Activated CD4-positive, alpha-beta memory T cell treated with anti-CD3 and anti-CD28 coated beads for 36 hours (primary cell): ENCODE measurements at regions of chr16 and their contacts with region 1.

Region 1: GRCh38 chr16:8878521-8878911 is 3.6 kb upstream of the LITAFD start:
- DNase-seq: no peak
- H3K4me3 Mint-ChIP-seq: no peak overlapping the region
- H3K27ac Mint-ChIP-seq: no peak overlapping the region
- H3K4me1 Mint-ChIP-seq: peaks cover 2% of the 10 kb centered on the region
- H3K27me3 Mint-ChIP-seq: no peaks in the 10 kb centered on the region

Region 2: DNA sequence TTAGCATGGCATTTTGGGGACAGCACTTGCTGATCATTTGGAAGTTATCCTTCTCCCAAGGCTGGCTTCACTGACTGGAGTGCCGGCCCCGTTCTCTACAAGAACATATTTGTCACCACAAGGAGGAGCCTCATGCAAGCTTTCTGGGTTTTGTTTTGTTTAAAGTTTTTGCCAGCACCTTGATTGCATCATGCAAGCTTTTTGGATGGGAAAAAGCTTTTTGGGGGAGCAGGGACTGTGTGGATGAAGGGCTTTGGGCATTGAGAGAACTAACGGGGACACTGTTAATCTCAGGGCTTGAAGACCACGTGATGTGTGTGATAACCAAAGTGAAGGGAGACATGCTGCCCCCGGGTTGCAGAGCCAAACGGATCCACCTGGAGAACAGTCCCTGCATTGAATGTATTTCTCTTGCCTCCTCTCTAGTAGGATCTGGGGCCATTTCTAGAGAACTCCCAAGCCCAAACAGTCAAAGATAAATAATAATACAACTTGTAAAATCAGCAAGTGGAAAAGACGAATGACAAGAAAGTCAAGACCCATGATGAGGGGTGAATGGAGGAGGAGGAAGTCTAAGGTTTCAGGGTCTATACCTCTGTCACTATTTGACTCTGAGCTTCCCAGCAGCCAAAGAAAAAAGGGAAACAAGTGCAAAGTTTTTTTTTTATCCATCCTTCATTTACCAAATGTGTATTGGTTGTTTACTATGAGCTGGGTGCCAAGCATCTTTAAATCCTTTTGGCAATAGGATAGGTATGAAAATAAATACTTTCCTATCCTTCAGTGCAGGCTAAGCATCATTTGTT is 305.4 kb before region 1 on chr16:
- CTCF ChIA-PET with region 1: interaction called, 13 read pairs
- POLR2A ChIA-PET with region 1: no interaction called
- intact Hi-C with region 1: no loop called
- DNase-seq: peak; percentile 21
- H3K4me3 Mint-ChIP-seq: no peak overlapping the region
- H3K27ac Mint-ChIP-seq: no peak overlapping the region
- H3K4me1 Mint-ChIP-seq: peaks cover 1% of the 10 kb centered on the region
- H3K27me3 Mint-ChIP-seq: peaks cover 10% of the 10 kb centered on the region

Region 3: DNA sequence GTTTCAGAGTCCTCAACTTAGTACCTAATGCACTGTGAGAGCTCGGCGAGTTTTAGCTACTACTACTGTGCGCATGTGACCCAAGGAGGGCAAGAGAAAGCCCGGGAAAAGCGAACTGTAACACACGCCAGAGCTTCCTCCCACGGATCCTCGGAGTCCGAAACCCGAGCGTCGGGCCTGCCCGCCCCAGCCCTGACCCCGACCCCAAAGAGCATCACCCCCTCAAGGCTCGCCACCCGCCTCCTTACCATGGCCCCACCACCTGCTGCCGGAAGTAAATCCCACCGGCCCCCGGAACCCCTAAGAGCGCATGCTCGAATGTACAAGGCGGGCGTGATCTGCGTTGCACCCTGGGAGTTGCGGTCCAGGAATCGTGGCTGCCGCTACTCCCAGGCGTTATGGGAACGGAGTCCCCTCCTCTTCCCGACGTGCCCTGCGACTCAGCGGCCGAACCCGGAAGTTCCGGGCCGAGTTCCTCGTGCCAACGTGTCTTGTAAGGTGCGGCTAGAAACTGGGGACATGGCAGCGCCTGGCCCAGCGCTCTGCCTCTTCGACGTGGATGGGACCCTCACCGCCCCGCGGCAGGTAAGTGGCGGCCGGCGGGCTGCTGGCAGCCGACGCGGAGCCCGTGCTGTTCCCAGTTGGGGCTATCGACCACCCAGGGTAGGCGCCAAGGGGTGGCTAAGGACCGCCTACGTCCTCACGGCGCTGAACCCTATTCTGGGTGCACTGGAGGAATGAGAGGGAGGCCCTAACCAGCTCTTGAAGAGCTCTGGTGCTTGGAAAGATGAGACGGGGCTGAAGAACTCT is 80.9 kb before region 1 on chr16 and contains the starts of genes PMM2 and TMEM186:
- CTCF ChIA-PET with region 1: interaction called, 10 read pairs
- POLR2A ChIA-PET with region 1: no interaction called
- intact Hi-C with region 1: no loop called
- DNase-seq: peak; percentile 97
- H3K4me3 Mint-ChIP-seq: peak within 1 kb of the TSS; percentile 92
- H3K27ac Mint-ChIP-seq: peak within 1 kb of the TSS; percentile 88
- H3K4me1 Mint-ChIP-seq: peaks cover 50% of the 10 kb centered on the region
- H3K27me3 Mint-ChIP-seq: no peaks in the 10 kb centered on the region
- total RNA-seq, gene PMM2: 34.0 to 36.0 TPM
- total RNA-seq, gene TMEM186: 16.0 TPM

Region 4: GRCh38 chr16:8808613-8809353 is 69.7 kb before region 1 on chr16:
- CTCF ChIA-PET with region 1: no interaction called
- POLR2A ChIA-PET with region 1: no interaction called
- intact Hi-C with region 1: no loop called
- DNase-seq: no peak
- H3K4me3 Mint-ChIP-seq: no peak overlapping the region
- H3K27ac Mint-ChIP-seq: no peak overlapping the region
- H3K4me1 Mint-ChIP-seq: peaks cover 14% of the 10 kb centered on the region
- H3K27me3 Mint-ChIP-seq: no peaks in the 10 kb centered on the region

Region 5: DNA sequence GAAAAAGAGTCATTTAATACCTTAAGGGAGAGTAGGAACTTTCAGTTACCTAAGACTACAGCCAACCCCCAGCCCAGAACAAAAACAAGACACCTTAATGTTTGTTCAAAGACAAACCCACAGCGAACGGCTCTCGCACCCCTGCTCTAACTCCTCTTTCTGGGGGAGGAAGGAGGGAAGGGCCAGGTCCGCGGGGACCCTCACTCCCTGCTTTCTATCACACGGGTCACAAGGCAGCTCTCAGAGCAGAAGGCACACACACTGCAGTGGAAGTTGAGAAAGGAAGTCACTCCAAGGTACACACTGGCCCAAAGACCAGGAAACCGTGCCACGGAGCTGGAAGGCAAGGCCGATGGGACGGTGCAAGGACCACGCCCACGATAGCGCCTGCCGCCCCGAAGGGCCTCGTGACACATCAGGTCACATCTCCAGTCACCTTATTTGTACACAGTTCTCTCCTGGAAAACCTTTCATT is 13.6 kb after region 1 on chr16:
- CTCF ChIA-PET with region 1: interaction called, 39 read pairs
- POLR2A ChIA-PET with region 1: interaction called, 4 read pairs
- intact Hi-C with region 1: no loop called
- DNase-seq: peak; percentile 54
- H3K4me3 Mint-ChIP-seq: peak overlapping the region; percentile 58
- H3K27ac Mint-ChIP-seq: peak overlapping the region; percentile 97
- H3K4me1 Mint-ChIP-seq: peaks cover 26% of the 10 kb centered on the region
- H3K27me3 Mint-ChIP-seq: no peaks in the 10 kb centered on the region

Region 6: GRCh38 chr16:9134739-9135138 is 256.2 kb after region 1 on chr16:
- CTCF ChIA-PET with region 1: interaction called, 10 read pairs
- POLR2A ChIA-PET with region 1: no interaction called
- intact Hi-C with region 1: no loop called
- DNase-seq: peak; percentile 79
- H3K4me3 Mint-ChIP-seq: no peak overlapping the region
- H3K27ac Mint-ChIP-seq: no peak overlapping the region
- H3K4me1 Mint-ChIP-seq: peaks cover 12% of the 10 kb centered on the region
- H3K27me3 Mint-ChIP-seq: peaks cover 8% of the 10 kb centered on the region